ENCODE measurements at regions of chr2 and their contacts with region 1.

Region 1: GRCh38 chr2:213885485-213885884 is 525.4 kb upstream of the VWC2L start:
- DNase-seq: no peak
- H3K4me3 Mint-ChIP-seq: no peak overlapping the region
- H3K27ac Mint-ChIP-seq: peak overlapping the region; percentile 25
- H3K4me1 Mint-ChIP-seq: peaks cover 15% of the 10 kb centered on the region
- H3K27me3 Mint-ChIP-seq: no peaks in the 10 kb centered on the region
- CTCF ChIP-seq: no peak

Region 2: GRCh38 chr2:213818436-213818835 is 67.0 kb before region 1 on chr2:
- CTCF ChIA-PET with region 1: no interaction called
- intact Hi-C with region 1: loop called (anchors 5 kb)
- DNase-seq: no peak
- H3K4me3 Mint-ChIP-seq: no peak overlapping the region
- H3K27ac Mint-ChIP-seq: no peak overlapping the region
- H3K4me1 Mint-ChIP-seq: peaks cover 13% of the 10 kb centered on the region
- H3K27me3 Mint-ChIP-seq: no peaks in the 10 kb centered on the region
- CTCF ChIP-seq: no peak